CD4-positive, alpha-beta memory T cell (primary cell): ENCODE measurements at regions of chr7 and their contacts with region 1.

Region 1: GRCh38 chr7:142459551-142459963 is 201.7 kb upstream of the PRSS58 start:
- DNase-seq: peak in 4 of 5 donors; percentile 30 to 39 (median 34)
- H3K4me3 ChIP-seq: no peak overlapping the region
- H3K4me3 Mint-ChIP-seq: peak overlapping the region in 7 of 8 donors; percentile 2 to 69 (median 29)
- H3K27ac ChIP-seq: no peak overlapping the region
- H3K27ac Mint-ChIP-seq: peak overlapping the region in 6 of 7 donors; percentile 34 to 83 (median 58)
- H3K4me1 ChIP-seq: peaks cover 46% of the 10 kb centered on the region
- H3K4me1 Mint-ChIP-seq: peaks cover 35 to 68% (median 53%) of the 10 kb centered on the region in 4 donors
- H3K27me3 ChIP-seq: no peaks in the 10 kb centered on the region
- H3K27me3 Mint-ChIP-seq: no peaks in the 10 kb centered on the region

Region 2: DNA sequence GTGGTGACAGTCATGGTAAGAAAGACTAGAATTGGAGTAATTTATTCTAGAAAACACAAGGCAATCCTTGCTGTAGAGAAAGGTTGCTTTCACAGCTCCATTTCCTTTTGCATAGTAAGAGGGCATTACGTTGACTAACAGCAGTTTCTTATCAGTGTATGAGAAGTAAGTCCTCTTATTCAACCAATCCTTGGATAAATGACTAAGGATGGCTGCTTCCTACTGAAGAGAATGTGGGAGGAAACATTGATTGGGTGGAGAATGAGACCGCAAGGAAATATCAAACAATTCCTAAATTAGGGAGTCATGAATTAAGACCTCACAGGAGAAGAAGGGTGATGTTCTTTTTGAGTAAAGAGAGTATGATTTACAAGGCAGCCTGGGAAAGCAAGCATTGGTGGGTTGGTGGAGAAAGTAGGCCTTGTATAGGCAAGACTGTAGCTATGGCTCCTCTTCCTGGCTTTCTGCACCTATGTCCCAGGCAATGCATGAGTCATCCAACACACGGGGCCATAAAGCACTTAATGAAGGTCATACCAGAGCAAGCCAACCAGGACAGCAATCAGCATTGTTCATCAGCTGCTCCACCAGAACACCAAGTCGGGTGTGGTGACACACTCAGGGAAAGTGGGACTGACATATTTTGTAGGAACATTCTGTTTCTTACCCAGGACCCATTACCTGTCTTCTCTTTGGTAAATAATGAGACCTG is 458.2 kb before region 1 on chr7:
- CTCF ChIA-PET with region 1: no interaction called
- POLR2A ChIA-PET with region 1: no interaction called
- intact Hi-C with region 1: no loop called
- DNase-seq: no peak
- H3K4me3 ChIP-seq: no peak overlapping the region
- H3K4me3 Mint-ChIP-seq: no peak overlapping the region
- H3K27ac ChIP-seq: no peak overlapping the region
- H3K27ac Mint-ChIP-seq: peak overlapping the region in 1 of 7 donors; percentile 24
- H3K4me1 ChIP-seq: no peaks in the 10 kb centered on the region
- H3K4me1 Mint-ChIP-seq: no peaks in the 10 kb centered on the region
- H3K27me3 ChIP-seq: no peaks in the 10 kb centered on the region
- H3K27me3 Mint-ChIP-seq: peaks cover 6 to 12% of the 10 kb centered on the region in 2 donors

Region 3: GRCh38 chr7:142438235-142438922 is 21.2 kb before region 1 on chr7:
- CTCF ChIA-PET with region 1: interaction called, 98 read pairs
- POLR2A ChIA-PET with region 1: interaction called, 4 read pairs
- intact Hi-C with region 1: loop called (anchors 2 kb)
- DNase-seq: peak in 4 of 5 donors; percentile 15 to 33 (median 26)
- H3K4me3 ChIP-seq: no peak overlapping the region
- H3K4me3 Mint-ChIP-seq: peak overlapping the region in 4 of 8 donors; percentile 0 to 58 (median 40)
- H3K27ac ChIP-seq: no peak overlapping the region
- H3K27ac Mint-ChIP-seq: peak overlapping the region in 2 of 7 donors; percentile 13 to 49
- H3K4me1 ChIP-seq: peaks cover 47% of the 10 kb centered on the region
- H3K4me1 Mint-ChIP-seq: peaks cover 38 to 71% (median 55%) of the 10 kb centered on the region in 4 donors
- H3K27me3 ChIP-seq: no peaks in the 10 kb centered on the region
- H3K27me3 Mint-ChIP-seq: no peaks in the 10 kb centered on the region

Region 4: GRCh38 chr7:142516038-142516501 is 56.5 kb after region 1 on chr7:
- CTCF ChIA-PET with region 1: interaction called, 18 read pairs
- POLR2A ChIA-PET with region 1: no interaction called
- intact Hi-C with region 1: loop called (anchors 5 kb)
- DNase-seq: peak in 4 of 5 donors; percentile 33 to 46 (median 44)
- H3K4me3 ChIP-seq: no peak overlapping the region
- H3K4me3 Mint-ChIP-seq: peak overlapping the region in 4 of 8 donors; percentile 18 to 75 (median 30)
- H3K27ac ChIP-seq: no peak overlapping the region
- H3K27ac Mint-ChIP-seq: peak overlapping the region in 3 of 7 donors; percentile 9 to 67 (median 57)
- H3K4me1 ChIP-seq: peaks cover 34% of the 10 kb centered on the region
- H3K4me1 Mint-ChIP-seq: peaks cover 12 to 50% (median 29%) of the 10 kb centered on the region in 4 donors
- H3K27me3 ChIP-seq: no peaks in the 10 kb centered on the region
- H3K27me3 Mint-ChIP-seq: no peaks in the 10 kb centered on the region

Region 5: DNA sequence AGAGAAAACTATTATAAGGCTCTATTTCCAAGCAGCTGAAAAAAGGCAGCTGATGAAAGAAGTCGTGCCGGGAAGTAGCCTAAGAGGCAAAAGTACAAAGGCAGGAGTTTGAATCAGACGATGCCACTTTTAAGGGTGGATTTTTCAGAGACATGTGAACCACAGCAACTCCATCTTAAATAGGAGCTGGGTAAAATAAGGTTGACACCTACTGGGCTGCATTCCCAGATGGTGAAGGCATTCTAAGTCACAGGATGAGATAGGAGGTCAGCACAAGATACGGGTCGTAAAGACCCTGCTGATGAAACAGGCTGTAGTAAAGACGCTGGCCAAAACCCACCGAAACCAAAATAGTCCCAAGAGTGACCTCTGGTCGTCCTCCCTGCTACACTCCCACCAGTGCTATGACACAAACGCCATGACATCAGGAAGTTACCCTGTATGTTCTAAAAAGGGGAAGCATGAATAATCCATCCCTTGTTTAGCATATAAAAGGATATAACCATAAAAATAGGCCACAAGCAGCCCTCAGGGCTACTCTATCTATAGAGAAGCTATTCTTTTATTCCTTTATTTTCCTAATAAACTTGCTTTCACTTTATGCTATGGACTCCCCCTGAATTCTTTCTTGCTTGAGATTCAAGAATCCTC is 244.2 kb after region 1 on chr7:
- CTCF ChIA-PET with region 1: no interaction called
- POLR2A ChIA-PET with region 1: no interaction called
- intact Hi-C with region 1: no loop called
- DNase-seq: no peak
- H3K4me3 ChIP-seq: no peak overlapping the region
- H3K4me3 Mint-ChIP-seq: no peak overlapping the region
- H3K27ac ChIP-seq: no peak overlapping the region
- H3K27ac Mint-ChIP-seq: peak overlapping the region in 1 of 7 donors; percentile 10
- H3K4me1 ChIP-seq: peaks cover 33% of the 10 kb centered on the region
- H3K4me1 Mint-ChIP-seq: peaks cover 25 to 49% (median 36%) of the 10 kb centered on the region in 4 donors
- H3K27me3 ChIP-seq: no peaks in the 10 kb centered on the region
- H3K27me3 Mint-ChIP-seq: no peaks in the 10 kb centered on the region